ENCODE measurements at regions of chr3 and their contacts with region 1.

Region 1: DNA sequence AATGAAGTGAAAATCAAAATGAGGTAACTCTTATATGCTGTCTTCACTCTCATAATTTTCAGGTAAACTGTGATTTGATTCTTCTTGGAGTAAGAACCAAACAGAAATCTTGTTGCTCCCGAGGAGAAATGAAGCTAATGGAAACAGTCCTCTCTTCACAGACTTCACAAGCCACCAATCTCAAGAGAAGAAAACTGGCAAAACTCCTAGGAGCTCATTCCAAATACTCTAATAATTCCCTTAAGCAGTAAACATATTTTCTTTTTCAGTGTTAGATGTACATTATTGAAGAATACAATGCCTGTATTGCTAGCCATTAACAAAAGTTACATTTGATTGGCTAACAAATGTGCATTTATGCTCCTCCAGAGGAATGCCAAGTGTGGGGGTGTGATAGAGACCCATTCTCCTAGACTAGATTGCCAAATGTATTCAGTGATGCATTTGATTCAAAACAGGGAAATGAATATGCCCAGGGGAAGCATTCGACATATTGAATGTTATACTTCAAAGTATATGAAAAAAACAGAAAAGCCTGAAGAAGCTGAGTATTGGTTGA is 11.8 kb upstream of the RIOX2 start:
- DNase-seq: no peak
- CTCF ChIP-seq: no peak

Region 2: GRCh38 chr3:97559388-97559787 is 424.6 kb before region 1 on chr3:
- CTCF ChIA-PET with region 1: no interaction called
- POLR2A ChIA-PET with region 1: no interaction called
- DNase-seq: no peak
- CTCF ChIP-seq: no peak

Region 3: GRCh38 chr3:97848779-97849178 is 135.2 kb before region 1 on chr3:
- CTCF ChIA-PET with region 1: no interaction called
- POLR2A ChIA-PET with region 1: no interaction called
- DNase-seq: no peak
- CTCF ChIP-seq: no peak

Region 4: GRCh38 chr3:97971677-97972567 is 12.1 kb before region 1 on chr3 and contains the start of gene RIOX2:
- CTCF ChIA-PET with region 1: interaction called, 10 read pairs
- POLR2A ChIA-PET with region 1: no interaction called
- DNase-seq: peak; percentile 86
- CTCF ChIP-seq: no peak

Region 5: GRCh38 chr3:98095870-98096269 is 111.9 kb after region 1 on chr3:
- CTCF ChIA-PET with region 1: no interaction called
- POLR2A ChIA-PET with region 1: no interaction called
- DNase-seq: no peak
- CTCF ChIP-seq: no peak

Measured in GM10248 (cell line).